Panc1 (cell line): ENCODE measurements at regions of chr7 and their contacts with region 1.

Region 1: GRCh38 chr7:63925623-63926460 is 72.8 kb upstream of the ZNF722 start:
- DNase-seq: peak; percentile 51
- ATAC-seq: peak; percentile 94
- H3K4me3 ChIP-seq: peak overlapping the region; percentile 62
- H3K27ac ChIP-seq: peak overlapping the region; percentile 89
- H3K4me1 ChIP-seq: no peaks in the 10 kb centered on the region
- H3K27me3 ChIP-seq: no peaks in the 10 kb centered on the region
- CTCF ChIP-seq: no peak

Region 2: GRCh38 chr7:63846171-63846570 is 79.7 kb before region 1 on chr7:
- CTCF ChIA-PET with region 1: no interaction called
- POLR2A ChIA-PET with region 1: no interaction called
- in situ Hi-C with region 1: no loop called
- intact Hi-C with region 1: no loop called
- DNase-seq: no peak
- ATAC-seq: no peak
- H3K4me3 ChIP-seq: no peak overlapping the region
- H3K27ac ChIP-seq: no peak overlapping the region
- H3K4me1 ChIP-seq: no peaks in the 10 kb centered on the region
- H3K27me3 ChIP-seq: no peaks in the 10 kb centered on the region
- CTCF ChIP-seq: no peak

Region 3: DNA sequence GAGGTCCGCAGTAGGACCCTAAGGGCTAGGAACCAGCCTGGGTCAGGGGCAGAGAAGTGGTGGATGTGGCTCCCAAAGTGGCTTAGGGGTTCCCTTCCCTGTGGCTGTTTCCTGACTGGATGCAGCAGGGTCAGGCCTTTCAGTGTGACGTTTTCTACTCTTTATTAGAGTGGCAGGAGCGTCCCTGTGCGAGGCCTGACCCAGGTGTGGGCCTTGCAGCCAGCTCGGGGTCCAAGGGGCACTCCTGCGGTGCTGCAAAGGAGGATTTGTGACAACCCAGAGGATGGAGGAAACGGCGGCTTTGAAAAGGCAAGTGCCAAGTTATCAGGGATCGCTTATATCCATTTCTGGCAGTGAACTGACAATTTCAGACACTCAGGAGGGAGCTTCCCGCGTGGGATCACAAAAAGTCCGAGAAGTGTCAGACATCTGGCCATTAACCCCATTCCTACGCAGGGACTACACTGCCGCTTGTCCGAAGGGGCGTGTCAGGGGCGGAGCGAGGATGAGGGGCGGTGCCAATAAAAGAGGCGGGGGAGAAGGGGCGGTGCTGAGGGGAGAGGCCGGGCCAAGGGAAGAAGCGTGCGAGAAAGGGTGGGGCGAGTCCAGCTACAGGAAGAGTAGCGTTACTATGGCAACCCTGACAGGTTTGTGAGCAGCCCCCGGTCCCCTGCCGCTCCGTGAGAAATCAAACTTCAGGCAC is 26.0 kb before region 1 on chr7:
- CTCF ChIA-PET with region 1: no interaction called
- POLR2A ChIA-PET with region 1: interaction called, 11 read pairs
- in situ Hi-C with region 1: no loop called
- intact Hi-C with region 1: no loop called
- DNase-seq: no peak
- ATAC-seq: peak; percentile 89
- H3K4me3 ChIP-seq: peak overlapping the region; percentile 77 to 83
- H3K27ac ChIP-seq: no peak overlapping the region
- H3K4me1 ChIP-seq: no peaks in the 10 kb centered on the region
- H3K27me3 ChIP-seq: no peaks in the 10 kb centered on the region
- CTCF ChIP-seq: no peak

Region 4: DNA sequence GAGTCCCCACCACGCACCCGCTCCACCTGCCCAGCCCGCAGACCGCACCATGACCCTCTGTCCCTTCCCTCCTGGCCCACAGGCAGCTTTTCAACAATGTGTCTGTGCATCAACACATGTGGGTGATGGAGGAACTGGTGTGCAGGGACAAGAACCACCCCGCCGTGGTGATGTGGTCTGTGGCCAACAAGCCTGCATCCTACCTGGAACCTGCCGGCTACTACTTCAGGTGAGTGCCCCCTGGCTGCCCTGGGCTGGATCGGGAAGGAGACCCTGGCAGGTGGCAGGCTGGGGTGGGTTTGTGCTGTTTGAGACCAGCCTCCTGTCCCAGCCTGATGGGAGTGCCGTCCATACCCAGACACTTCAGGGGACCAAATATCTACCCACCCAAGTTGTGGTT is 188.9 kb after region 1 on chr7:
- CTCF ChIA-PET with region 1: no interaction called
- POLR2A ChIA-PET with region 1: no interaction called
- in situ Hi-C with region 1: no loop called
- intact Hi-C with region 1: no loop called
- DNase-seq: no peak
- ATAC-seq: no peak
- H3K4me3 ChIP-seq: no peak overlapping the region
- H3K27ac ChIP-seq: no peak overlapping the region
- H3K4me1 ChIP-seq: no peaks in the 10 kb centered on the region
- H3K27me3 ChIP-seq: no peaks in the 10 kb centered on the region
- CTCF ChIP-seq: no peak